HEK293 (cell line): ENCODE measurements at regions of chr21 and their contacts with region 1.

Region 1: DNA sequence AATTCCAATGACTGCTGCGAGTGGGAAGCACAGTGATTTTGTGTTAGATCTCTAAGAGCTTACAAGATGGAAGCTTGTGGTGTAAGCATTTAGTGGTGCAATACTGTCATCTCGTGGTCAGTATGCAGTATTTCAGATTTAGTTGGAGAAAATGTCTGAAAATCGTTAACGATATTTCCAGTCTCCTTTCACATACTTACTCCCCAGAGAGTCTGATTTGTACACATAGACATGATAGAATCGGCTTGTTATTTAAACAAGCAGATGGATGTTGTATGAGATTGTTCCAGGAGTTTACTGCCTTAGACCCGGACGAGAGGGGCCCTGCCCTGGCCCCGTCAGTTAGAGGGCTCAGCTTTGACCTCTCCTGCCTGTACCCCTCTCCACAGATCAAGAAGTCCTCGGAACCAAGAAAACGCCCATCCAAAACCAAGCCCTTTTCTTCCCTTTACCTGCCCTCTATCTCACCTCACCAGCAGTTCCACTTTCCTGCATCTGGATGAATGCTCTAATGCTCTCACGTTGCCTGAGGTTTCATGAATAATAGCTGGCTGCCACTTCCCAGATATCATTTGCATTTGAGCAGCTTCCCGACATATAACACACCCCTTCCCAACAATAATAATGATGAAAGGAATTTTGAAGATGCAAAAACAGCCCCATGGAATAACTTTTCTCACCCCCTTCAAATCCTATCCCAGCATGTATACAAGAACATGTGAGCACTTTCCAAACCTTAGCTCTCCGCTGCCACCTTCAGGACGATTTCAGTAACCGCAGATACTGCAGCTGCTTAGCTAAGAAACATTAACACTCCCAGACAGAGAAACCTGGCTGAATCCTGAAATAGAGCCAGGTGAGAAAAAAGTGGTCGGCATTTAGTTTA is 247.3 kb downstream of the LTN1 start:
- H3K4me3 ChIP-seq: peak overlapping the region; percentile 32
- H3K27ac ChIP-seq: no peak overlapping the region
- H3K4me1 ChIP-seq: no peaks in the 10 kb centered on the region; the same call in 1 of the 2 replicates
- CTCF ChIP-seq: peak; percentile 95

Region 2: DNA sequence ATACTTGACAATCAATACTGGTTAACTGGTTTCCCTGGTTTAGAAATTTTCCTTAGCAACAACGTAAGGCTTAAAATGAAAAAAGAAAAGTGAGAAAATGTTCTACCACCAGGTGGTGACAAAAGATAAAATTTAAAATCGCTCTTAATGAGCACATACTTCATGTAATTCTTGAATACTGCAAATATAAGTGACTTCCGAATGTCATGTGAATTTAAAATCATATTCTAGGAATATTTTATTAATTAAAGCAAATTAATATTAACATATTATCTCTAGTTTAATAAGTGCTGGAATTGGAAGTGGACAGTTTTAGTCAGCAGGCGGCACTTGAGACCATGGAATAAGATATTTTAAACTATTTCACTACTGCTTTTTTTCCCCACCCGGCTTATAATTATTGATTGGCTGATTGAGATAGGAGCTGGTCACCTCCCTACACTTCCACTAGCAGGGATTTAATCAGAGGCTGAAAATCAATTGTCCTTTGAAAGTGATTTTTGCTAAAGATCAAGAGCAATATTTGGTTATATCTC is 1895.2 kb before region 1 on chr21:
- CTCF ChIA-PET with region 1: interaction called, 23 read pairs
- POLR2A ChIA-PET with region 1: interaction called, 3 read pairs
- H3K4me3 ChIP-seq: no peak overlapping the region
- H3K27ac ChIP-seq: no peak overlapping the region
- H3K4me1 ChIP-seq: no peaks in the 10 kb centered on the region; the same call in 1 of the 2 replicates
- CTCF ChIP-seq: peak; percentile 42; the same call in 1 of the 2 replicates

Region 3: GRCh38 chr21:28336314-28336713 is 409.1 kb before region 1 on chr21:
- CTCF ChIA-PET with region 1: interaction called, 39 read pairs
- POLR2A ChIA-PET with region 1: no interaction called
- H3K4me3 ChIP-seq: no peak overlapping the region
- H3K27ac ChIP-seq: no peak overlapping the region
- H3K4me1 ChIP-seq: no peaks in the 10 kb centered on the region
- CTCF ChIP-seq: no peak

Region 4: DNA sequence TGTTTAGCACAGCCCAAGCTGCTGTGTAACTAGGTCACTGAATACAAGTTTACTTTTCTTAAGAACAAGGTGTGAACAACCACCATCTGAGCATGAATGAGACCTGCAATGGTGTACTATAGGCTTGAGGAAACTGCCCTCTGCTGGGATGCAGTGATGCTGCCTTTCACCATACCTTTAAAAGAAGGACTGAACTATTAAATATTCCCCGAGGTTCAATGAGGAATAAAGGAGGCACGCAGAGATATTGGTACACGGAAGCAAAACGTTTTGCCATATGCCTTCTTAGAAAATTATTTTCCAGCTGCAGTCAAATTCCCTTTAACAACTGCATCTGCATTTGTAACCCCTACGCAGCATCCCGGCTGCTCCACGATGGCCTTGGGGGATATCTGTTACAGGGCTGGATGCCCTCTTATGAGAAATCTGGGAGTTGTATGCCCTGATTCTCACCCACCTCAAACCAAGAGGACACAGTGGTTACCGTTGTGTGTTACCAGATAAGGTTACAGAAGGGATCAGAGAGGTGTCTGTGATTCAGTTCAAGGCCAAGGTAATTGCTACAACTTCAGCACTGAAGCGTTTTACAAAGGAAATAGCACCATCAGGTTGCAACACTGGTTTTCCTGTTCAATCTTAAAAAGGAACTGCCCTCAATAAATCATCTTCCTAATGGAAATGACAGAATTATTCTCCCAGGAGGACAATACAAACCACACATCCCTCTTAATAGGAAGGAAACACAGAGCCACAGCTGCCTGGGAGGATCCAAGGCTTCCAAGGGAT is 223.2 kb before region 1 on chr21:
- CTCF ChIA-PET with region 1: interaction called, 43 read pairs
- POLR2A ChIA-PET with region 1: no interaction called
- H3K4me3 ChIP-seq: no peak overlapping the region
- H3K27ac ChIP-seq: no peak overlapping the region
- H3K4me1 ChIP-seq: no peaks in the 10 kb centered on the region
- CTCF ChIP-seq: no peak

Region 5: GRCh38 chr21:28675331-28676041 is 69.9 kb before region 1 on chr21:
- CTCF ChIA-PET with region 1: no interaction called
- POLR2A ChIA-PET with region 1: no interaction called
- H3K4me3 ChIP-seq: no peak overlapping the region
- H3K27ac ChIP-seq: no peak overlapping the region
- H3K4me1 ChIP-seq: no peaks in the 10 kb centered on the region
- CTCF ChIP-seq: no peak

Region 6: GRCh38 chr21:28699596-28700259 is 45.6 kb before region 1 on chr21:
- CTCF ChIA-PET with region 1: interaction called, 12 read pairs
- POLR2A ChIA-PET with region 1: no interaction called
- H3K4me3 ChIP-seq: no peak overlapping the region
- H3K27ac ChIP-seq: no peak overlapping the region
- H3K4me1 ChIP-seq: no peaks in the 10 kb centered on the region
- CTCF ChIP-seq: no peak

Region 7: GRCh38 chr21:28779914-28780313 is 34.5 kb after region 1 on chr21:
- CTCF ChIA-PET with region 1: interaction called, 10 read pairs
- POLR2A ChIA-PET with region 1: no interaction called
- H3K4me3 ChIP-seq: no peak overlapping the region
- H3K27ac ChIP-seq: no peak overlapping the region
- H3K4me1 ChIP-seq: no peaks in the 10 kb centered on the region
- CTCF ChIP-seq: no peak

Region 8: DNA sequence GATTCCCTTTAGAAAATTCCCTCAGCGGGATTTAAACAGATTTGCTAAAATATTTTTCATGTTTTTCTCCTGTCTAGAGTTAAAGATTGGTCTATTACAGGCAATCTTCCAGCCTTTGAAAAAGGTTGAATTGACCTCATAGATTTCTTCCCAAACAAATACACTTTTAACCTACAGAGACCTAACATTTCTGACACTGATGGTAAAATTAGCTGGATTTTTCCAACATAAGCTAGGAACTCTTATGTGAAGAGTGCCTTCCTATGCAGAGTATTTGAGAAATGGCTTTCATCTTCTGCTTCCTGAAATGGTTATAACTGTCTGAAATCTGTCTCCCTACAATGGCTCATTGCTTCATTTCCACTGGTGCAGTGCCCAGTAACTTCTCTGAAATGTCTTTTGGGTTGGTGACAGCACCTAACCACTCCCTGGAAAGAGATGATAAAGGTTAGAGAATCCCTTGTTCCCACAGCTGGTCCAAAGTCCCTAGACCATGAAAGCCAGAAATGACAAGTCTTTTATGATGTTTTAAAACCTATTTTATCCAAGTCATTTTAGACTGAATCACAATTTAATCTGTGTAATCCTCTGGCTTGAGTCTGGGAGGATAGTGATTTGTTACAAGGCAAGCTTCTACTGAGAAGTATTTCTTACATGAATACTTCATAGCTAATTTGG is 822.8 kb after region 1 on chr21:
- CTCF ChIA-PET with region 1: no interaction called
- POLR2A ChIA-PET with region 1: no interaction called
- H3K4me3 ChIP-seq: no peak overlapping the region
- H3K27ac ChIP-seq: no peak overlapping the region
- H3K4me1 ChIP-seq: no peaks in the 10 kb centered on the region
- CTCF ChIP-seq: no peak